Activated CD4-positive, alpha-beta T cell treated with anti-CD3 and anti-CD28 coated beads, Interleukin-2, amount 10 ng/mL, durations not matched to agents 24 days and 14 days (primary cell): ENCODE measurements at regions of chr12 and their contacts with region 1.

Region 1: DNA sequence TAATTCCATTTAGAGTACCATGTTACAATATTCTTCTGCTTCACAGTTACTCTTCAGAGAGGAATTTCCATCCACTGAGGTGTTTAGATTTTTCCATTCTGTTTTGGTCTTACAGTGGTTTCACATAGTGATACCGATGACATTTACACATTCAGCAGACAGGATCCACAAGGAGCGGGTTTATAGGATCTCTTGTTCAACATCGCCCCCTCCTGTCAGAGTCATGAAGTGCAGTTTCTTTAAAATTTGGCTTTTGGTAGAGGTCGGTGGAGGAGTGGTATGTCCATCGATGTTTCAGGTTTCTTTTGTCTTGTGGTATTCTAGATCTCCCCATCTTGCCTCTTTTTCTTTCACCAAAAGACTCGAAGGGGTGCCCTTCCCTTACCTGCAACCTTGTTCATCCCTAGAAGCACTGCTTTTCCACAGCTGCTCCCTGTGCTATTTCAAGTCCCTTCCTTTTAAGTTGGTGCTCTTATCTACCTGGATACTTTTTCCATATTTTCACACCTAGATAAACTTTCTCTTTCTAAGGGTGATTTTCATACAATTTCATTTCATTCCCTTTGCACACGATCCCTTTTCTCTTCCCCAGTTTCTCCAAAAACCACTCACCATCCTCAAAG is 181.3 kb downstream of the ITPR2 start:
- DNase-seq: peak; percentile 85
- H3K4me3 Mint-ChIP-seq: no peak overlapping the region
- H3K27ac Mint-ChIP-seq: no peak overlapping the region
- H3K4me1 Mint-ChIP-seq: peaks cover 4% of the 10 kb centered on the region
- H3K27me3 Mint-ChIP-seq: no peaks in the 10 kb centered on the region

Region 2: GRCh38 chr12:26434299-26435068 is 217.2 kb before region 1 on chr12:
- intact Hi-C with region 1: loop called (anchors 2 kb)
- DNase-seq: no peak
- H3K4me3 Mint-ChIP-seq: no peak overlapping the region
- H3K27ac Mint-ChIP-seq: no peak overlapping the region
- H3K4me1 Mint-ChIP-seq: no peaks in the 10 kb centered on the region
- H3K27me3 Mint-ChIP-seq: no peaks in the 10 kb centered on the region